ENCODE measurements at regions of chr16 and their contacts with region 1.

Region 1: GRCh38 chr16:22077700-22078313 is 14.5 kb upstream of the VWA3A start:
- DNase-seq: peak; percentile 74 to 82
- H3K4me3 ChIP-seq: no peak overlapping the region
- H3K27ac ChIP-seq: no peak overlapping the region
- H3K4me1 ChIP-seq: peaks cover 0 to 13% (median 5%) of the 10 kb centered on the region in 4 donors
- H3K27me3 ChIP-seq: no peaks in the 10 kb centered on the region
- CTCF ChIP-seq: peak in 5 of 7 experiments; percentile 43 to 78 (median 71)
- EP300 ChIP-seq: no peak
- POLR2A ChIP-seq: no peak

Region 2: DNA sequence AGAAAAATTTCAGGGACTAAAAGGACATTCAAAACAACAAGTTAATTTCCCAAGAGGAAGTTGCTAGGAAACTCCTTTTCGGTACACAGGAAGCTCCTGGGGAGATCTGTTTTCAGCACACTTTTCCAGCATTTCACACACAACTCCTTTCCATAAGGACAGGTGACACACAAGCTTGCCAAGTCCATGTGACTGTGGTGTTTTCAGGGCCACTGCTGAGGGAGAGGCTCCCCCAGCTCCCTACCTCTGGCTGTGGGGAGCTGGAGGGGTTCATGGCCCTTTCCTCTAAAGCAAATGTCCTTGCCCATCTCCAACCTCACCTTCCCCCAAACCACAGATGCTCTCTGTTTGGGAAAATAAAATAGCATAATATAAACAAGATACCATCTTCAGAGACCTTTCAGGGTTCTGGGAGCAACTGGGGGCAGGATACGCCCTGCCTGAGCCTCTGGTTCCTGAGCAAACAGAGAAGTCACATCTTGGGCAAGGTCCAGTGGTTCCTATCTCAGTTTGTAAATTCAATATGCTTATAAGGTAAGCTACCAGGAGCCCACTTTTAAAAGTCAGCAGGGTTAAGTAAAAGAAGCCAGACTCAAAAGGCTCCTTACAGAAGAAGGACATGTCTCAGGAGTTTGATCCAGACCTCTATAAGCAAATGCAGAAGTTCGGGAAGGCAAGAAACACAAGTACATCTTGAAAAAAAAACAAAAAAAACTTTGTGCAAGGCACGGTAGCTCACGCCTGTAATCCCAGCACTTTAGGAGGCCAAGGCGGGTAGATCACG is 79.9 kb before region 1 on chr16:
- intact Hi-C with region 1: loop called (anchors 5 kb)
- DNase-seq: peak in 1 of 2 donors; percentile 19
- H3K4me3 ChIP-seq: no peak overlapping the region
- H3K27ac ChIP-seq: peak overlapping the region in 2 of 5 donors; percentile 34 to 41
- H3K4me1 ChIP-seq: peaks cover 5 to 15% (median 11%) of the 10 kb centered on the region in 4 donors
- H3K27me3 ChIP-seq: no peaks in the 10 kb centered on the region
- CTCF ChIP-seq: no peak
- EP300 ChIP-seq: no peak
- POLR2A ChIP-seq: no peak

Region 3: GRCh38 chr16:22161999-22162655 is 84.3 kb after region 1 on chr16 and contains the start of gene SDR42E2:
- intact Hi-C with region 1: no loop called
- DNase-seq: peak; percentile 31 to 67
- H3K4me3 ChIP-seq: peak within 1 kb of the TSS; percentile 9 to 45 (median 19)
- H3K27ac ChIP-seq: no peak within 1 kb of the TSS
- H3K4me1 ChIP-seq: peaks cover 6 to 10% (median 9%) of the 10 kb centered on the region in 4 donors
- H3K27me3 ChIP-seq: peaks cover 0 to 52% (median 11%) of the 10 kb centered on the region in 3 donors
- CTCF ChIP-seq: no peak
- EP300 ChIP-seq: no peak
- POLR2A ChIP-seq: no peak
- total RNA-seq, gene SDR42E2: not detected

Region 4: DNA sequence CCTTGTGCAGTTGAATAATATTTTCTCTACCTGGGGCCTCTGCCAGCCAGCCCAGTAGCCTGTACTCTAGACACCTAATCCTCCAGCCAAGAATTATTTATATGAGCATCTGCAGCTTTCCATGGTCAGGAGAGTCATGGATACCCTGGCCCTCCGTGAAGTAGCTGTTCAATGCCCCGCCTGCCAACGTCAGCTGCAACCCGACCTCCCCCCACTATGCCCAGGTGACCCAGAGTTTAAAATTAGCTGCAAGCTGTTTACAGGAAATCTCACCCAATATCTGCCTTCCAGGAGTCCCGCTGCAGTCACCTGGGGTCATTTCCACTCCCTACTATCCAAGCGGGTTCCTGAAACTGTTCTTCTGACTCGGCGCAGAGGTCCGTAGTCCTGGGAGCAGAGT is 96.8 kb after region 1 on chr16:
- intact Hi-C with region 1: loop called (anchors 10 kb)
- DNase-seq: no peak
- H3K4me3 ChIP-seq: no peak overlapping the region
- H3K27ac ChIP-seq: no peak overlapping the region
- H3K4me1 ChIP-seq: no peaks in the 10 kb centered on the region
- H3K27me3 ChIP-seq: no peaks in the 10 kb centered on the region
- CTCF ChIP-seq: no peak
- EP300 ChIP-seq: no peak
- POLR2A ChIP-seq: no peak